ENCODE measurements at regions of chr1 and their contacts with region 1.

Region 1: GRCh38 chr1:243708210-243708609 is 141.8 kb downstream of the AKT3 start:
- DNase-seq: no peak
- ATAC-seq: no peak
- H3K4me3 Mint-ChIP-seq: no peak overlapping the region
- H3K27ac Mint-ChIP-seq: no peak overlapping the region
- H3K4me1 Mint-ChIP-seq: peaks cover 8% of the 10 kb centered on the region
- H3K27me3 Mint-ChIP-seq: no peaks in the 10 kb centered on the region
- CTCF ChIP-seq: no peak

Region 2: GRCh38 chr1:243946946-243947345 is 238.7 kb after region 1 on chr1:
- CTCF ChIA-PET with region 1: no interaction called
- POLR2A ChIA-PET with region 1: no interaction called
- intact Hi-C with region 1: loop called (anchors 1 kb)
- DNase-seq: no peak
- ATAC-seq: no peak
- H3K4me3 Mint-ChIP-seq: no peak overlapping the region
- H3K27ac Mint-ChIP-seq: no peak overlapping the region
- H3K4me1 Mint-ChIP-seq: no peaks in the 10 kb centered on the region
- H3K27me3 Mint-ChIP-seq: peaks cover 7% of the 10 kb centered on the region
- CTCF ChIP-seq: no peak

Region 3: DNA sequence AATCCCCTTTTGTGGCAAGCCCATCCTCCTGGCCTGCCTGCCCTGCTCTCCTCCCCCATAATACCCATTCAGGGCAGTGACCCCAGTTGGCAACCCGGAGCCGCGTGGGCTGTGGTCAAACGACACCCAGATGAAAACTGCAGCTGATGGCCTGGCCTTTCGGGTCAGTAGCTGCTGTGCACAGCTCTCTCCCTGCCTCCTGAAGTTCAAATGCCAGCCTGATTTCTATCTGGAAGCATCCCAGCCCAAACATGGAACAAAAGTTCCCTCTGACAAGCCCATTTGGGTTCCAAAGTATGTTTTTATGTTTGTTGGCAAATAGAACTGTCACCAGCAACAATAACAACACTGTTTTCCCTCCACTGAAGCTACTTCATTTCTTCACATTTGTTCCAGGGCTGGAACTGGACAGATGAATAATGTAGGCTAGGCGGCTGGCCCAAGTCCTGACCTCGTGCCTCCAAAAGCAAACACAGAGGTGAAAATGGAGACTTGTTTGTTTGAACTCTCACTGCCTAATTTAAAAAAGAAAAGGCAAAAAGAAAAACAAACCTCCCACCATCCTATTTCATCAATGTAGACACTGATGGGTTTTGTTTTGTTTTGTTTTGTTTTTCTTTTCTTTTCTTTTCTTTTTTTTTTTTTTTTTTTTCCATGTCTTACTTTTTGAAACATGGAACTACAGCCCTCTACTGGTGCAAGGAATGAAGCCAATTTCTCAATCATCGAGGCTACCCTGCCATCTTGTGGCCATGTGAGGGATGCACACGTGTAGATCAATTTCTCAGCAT is 564.5 kb after region 1 on chr1:
- CTCF ChIA-PET with region 1: interaction called, 9 read pairs
- POLR2A ChIA-PET with region 1: no interaction called
- intact Hi-C with region 1: loop called (anchors 1 kb)
- DNase-seq: peak; percentile 50
- ATAC-seq: peak; percentile 96
- H3K4me3 Mint-ChIP-seq: no peak overlapping the region
- H3K27ac Mint-ChIP-seq: no peak overlapping the region
- H3K4me1 Mint-ChIP-seq: peaks cover 21% of the 10 kb centered on the region
- H3K27me3 Mint-ChIP-seq: no peaks in the 10 kb centered on the region
- CTCF ChIP-seq: peak; percentile 92

Measured in activated B cell treated with CpG ODN at 0.5 μM for 24 hours (primary cell).